ENCODE measurements at regions of chr1 and their contacts with region 1.

Region 1: GRCh38 chr1:31422505-31423319 is 9.7 kb downstream of the SERINC2 start:
- DNase-seq: peak in 9 of 10 donors; percentile 49 to 80 (median 69)
- H3K4me3 ChIP-seq: peak overlapping the region in 3 of 59 donors; percentile 8 to 31 (median 31)
- H3K27ac ChIP-seq: no peak overlapping the region
- H3K27me3 ChIP-seq: peaks cover 0 to 7% (median 0%) of the 10 kb centered on the region in 45 donors
- CTCF ChIP-seq: peak; percentile 83 to 98 (median 94)

Region 2: DNA sequence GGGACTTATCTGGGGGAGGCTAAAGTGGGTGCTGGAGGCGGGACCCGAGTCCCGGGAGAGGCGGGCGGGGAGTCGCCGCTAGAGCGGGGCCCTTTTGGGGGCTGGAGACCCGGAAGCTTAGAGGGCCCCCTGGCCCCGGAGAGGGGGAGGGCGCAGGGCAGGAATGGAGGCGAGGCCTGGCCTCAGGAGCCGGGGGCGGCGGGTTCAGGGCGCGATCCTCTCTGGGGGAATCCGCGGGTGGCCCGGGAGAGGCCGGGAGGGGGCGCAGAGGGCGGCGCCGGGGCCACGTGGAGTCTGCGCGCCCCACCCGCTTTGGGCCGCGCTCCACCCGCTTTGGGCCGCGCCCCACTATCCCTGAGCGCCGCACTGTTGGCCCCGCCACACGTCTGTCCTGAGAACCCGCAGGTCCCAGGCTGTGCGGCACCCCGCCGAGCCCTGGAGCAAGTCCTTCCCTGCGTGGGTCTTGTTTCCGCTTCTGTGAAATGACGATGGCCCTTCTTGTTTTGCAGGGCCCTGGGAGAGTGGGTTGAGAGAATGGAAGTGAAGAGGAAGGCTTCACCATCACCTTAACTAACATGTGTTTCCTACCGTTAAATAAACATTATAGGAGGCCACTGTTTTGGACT is 267.4 kb before region 1 on chr1:
- intact Hi-C with region 1: loop called in 1 of 2 experiments (anchors 5 kb)
- DNase-seq: peak in 8 of 10 donors; percentile 12 to 70 (median 40)
- H3K4me3 ChIP-seq: peak overlapping the region; percentile 58 to 88 (median 69)
- H3K27ac ChIP-seq: peak overlapping the region in 17 of 59 donors; percentile 0 to 76 (median 46)
- H3K27me3 ChIP-seq: no peaks in the 10 kb centered on the region
- CTCF ChIP-seq: peak in 43 of 56 donors; percentile 9 to 46 (median 25)

Region 3: GRCh38 chr1:31182352-31182751 is 240.4 kb before region 1 on chr1:
- intact Hi-C with region 1: loop called (anchors 2 to 5 kb)
- DNase-seq: peak in 9 of 10 donors; percentile 26 to 85 (median 58)
- H3K4me3 ChIP-seq: peak overlapping the region in 55 of 59 donors; percentile 8 to 64 (median 42)
- H3K27ac ChIP-seq: peak overlapping the region in 9 of 59 donors; percentile 11 to 68 (median 36)
- H3K27me3 ChIP-seq: no peaks in the 10 kb centered on the region
- CTCF ChIP-seq: peak in 32 of 56 donors; percentile 8 to 47 (median 30)

Region 4: GRCh38 chr1:31296486-31297276 is 126.0 kb before region 1 on chr1 and contains the starts of genes SNRNP40 and ZCCHC17:
- intact Hi-C with region 1: loop called in 1 of 2 experiments (anchors 10 kb)
- DNase-seq: peak; percentile 80 to 97 (median 94)
- H3K4me3 ChIP-seq: peak within 1 kb of the TSS; percentile 55 to 100 (median 94)
- H3K27ac ChIP-seq: peak within 1 kb of the TSS in 58 of 59 donors; percentile 8 to 97 (median 86)
- H3K27me3 ChIP-seq: no peaks in the 10 kb centered on the region
- CTCF ChIP-seq: peak in 54 of 56 donors; percentile 17 to 76 (median 48)
- total RNA-seq, gene SNRNP40: 28.0 to 64.2 (median 38.5) TPM
- total RNA-seq, gene ZCCHC17: 27.3 to 71.7 (median 48.5) TPM

Region 5: DNA sequence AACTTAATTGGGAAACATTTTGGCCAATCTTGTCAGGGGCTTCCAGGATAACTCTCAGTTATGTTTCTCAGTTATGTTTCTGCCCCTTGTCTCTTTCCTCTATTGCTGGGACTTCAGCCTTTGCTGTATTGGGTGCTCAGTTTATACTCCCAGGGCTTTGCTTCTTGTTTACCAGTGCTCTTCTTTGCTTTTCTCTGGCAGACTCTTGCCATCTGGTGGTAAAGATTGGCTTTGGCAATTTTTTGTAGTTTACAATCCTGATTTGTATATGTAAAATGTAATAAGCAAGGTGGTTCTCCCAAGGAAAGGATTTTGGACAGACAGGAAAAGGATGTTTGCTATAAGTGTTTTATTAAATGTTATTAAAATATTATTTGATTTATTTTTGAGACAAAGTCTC is 87.7 kb before region 1 on chr1:
- intact Hi-C with region 1: loop called in 1 of 2 experiments (anchors 1 kb)
- DNase-seq: peak in 1 of 10 donors; percentile 30
- H3K4me3 ChIP-seq: no peak overlapping the region
- H3K27ac ChIP-seq: peak overlapping the region in 3 of 59 donors; percentile 23 to 63 (median 28)
- H3K27me3 ChIP-seq: no peaks in the 10 kb centered on the region
- CTCF ChIP-seq: peak; percentile 44 to 89 (median 72)

Region 6: GRCh38 chr1:31354283-31354682 is 68.4 kb before region 1 on chr1:
- intact Hi-C with region 1: no loop called
- DNase-seq: no peak
- H3K4me3 ChIP-seq: no peak overlapping the region
- H3K27ac ChIP-seq: peak overlapping the region in 32 of 59 donors; percentile 1 to 62 (median 34)
- H3K27me3 ChIP-seq: no peaks in the 10 kb centered on the region
- CTCF ChIP-seq: no peak

Region 7: GRCh38 chr1:31394628-31395193 is 28.0 kb before region 1 on chr1:
- intact Hi-C with region 1: loop called in 1 of 2 experiments (anchors 1 kb)
- DNase-seq: peak; percentile 70 to 87 (median 82)
- H3K4me3 ChIP-seq: peak overlapping the region; percentile 18 to 72 (median 50)
- H3K27ac ChIP-seq: peak overlapping the region in 4 of 59 donors; percentile 3 to 67 (median 34)
- H3K27me3 ChIP-seq: no peaks in the 10 kb centered on the region
- CTCF ChIP-seq: peak; percentile 38 to 95 (median 88)

Region 8: DNA sequence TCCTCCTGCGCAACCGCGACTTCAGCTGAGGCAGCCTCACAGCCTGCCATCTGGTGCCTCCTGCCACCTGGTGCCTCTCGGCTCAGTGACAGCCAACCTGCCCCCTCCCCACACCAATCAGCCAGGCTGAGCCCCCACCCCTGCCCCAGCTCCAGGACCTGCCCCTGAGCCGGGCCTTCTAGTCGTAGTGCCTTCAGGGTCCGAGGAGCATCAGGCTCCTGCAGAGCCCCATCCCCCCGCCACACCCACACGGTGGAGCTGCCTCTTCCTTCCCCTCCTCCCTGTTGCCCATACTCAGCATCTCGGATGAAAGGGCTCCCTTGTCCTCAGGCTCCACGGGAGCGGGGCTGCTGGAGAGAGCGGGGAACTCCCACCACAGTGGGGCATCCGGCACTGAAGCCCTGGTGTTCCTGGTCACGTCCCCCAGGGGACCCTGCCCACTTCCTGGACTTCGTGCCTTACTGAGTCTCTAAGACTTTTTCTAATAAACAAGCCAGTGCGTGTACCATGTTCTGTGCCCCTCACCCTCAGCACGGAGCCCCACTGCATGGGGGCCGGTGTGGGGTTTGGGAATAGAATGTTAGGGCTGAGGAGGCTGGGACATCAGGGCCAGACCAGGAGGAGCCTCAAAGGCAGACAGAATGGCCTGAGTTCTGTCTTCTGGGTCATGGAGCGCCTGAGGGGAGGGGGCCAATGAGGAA is 11.6 kb after region 1 on chr1:
- intact Hi-C with region 1: no loop called
- DNase-seq: no peak
- H3K4me3 ChIP-seq: peak overlapping the region in 2 of 59 donors; percentile 3 to 9
- H3K27ac ChIP-seq: no peak overlapping the region
- H3K27me3 ChIP-seq: no peaks in the 10 kb centered on the region
- CTCF ChIP-seq: no peak

Region 9: GRCh38 chr1:31548907-31549808 is 126.4 kb after region 1 on chr1:
- intact Hi-C with region 1: loop called in 1 of 2 experiments (anchors 10 kb)
- DNase-seq: peak; percentile 69 to 94 (median 80)
- H3K4me3 ChIP-seq: peak overlapping the region in 44 of 59 donors; percentile 0 to 54 (median 34)
- H3K27ac ChIP-seq: peak overlapping the region in 23 of 59 donors; percentile 3 to 76 (median 39)
- H3K27me3 ChIP-seq: peaks cover 0 to 3% (median 0%) of the 10 kb centered on the region in 45 donors
- CTCF ChIP-seq: peak; percentile 80 to 98 (median 94)